HEK293 (cell line): ENCODE measurements at regions of chr15 and their contacts with region 1.

Region 1: GRCh38 chr15:71780115-71780976 is 30.0 kb upstream of the NR2E3 start:
- H3K4me3 ChIP-seq: no peak overlapping the region
- H3K27ac ChIP-seq: no peak overlapping the region
- H3K4me1 ChIP-seq: peaks cover 3% of the 10 kb centered on the region; the same call in 1 of the 2 replicates
- CTCF ChIP-seq: peak; percentile 91

Region 2: GRCh38 chr15:71612869-71613268 is 167.5 kb before region 1 on chr15:
- CTCF ChIA-PET with region 1: no interaction called
- POLR2A ChIA-PET with region 1: no interaction called
- H3K4me3 ChIP-seq: no peak overlapping the region
- H3K27ac ChIP-seq: no peak overlapping the region
- H3K4me1 ChIP-seq: no peaks in the 10 kb centered on the region
- CTCF ChIP-seq: no peak

Region 3: DNA sequence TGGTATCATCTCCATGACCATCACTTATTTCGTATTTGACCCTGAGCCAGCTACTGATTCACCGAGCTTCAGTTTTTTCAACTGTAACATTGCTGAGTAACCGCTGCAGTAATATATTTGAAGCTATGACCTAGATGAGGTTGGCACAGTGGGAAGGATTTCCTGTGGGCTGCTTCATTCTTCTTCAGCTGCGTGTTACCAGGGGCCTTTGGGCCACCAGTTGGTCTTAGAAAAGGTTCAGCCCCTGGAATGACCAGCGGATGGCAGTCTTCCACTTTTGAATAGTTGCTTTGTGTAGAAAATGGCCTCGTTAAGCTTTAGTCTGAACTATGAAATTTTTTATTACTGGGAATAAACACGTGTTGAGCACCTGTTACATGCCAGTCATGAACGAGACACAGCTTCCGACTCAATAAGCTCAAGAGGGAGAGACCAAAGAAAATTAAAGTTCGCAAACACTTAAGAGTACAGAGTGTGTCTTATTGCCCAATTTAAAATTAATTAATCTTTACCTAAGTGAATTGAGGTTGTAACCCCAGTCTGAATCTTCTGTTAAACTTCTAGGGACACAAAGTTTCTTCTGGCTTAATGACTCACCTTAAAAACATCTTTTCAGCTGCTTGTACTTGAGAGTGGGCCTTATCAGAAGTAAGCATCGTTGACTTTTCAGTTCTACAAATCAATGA is 27.6 kb before region 1 on chr15:
- CTCF ChIA-PET with region 1: interaction called, 24 read pairs
- POLR2A ChIA-PET with region 1: no interaction called
- H3K4me3 ChIP-seq: no peak overlapping the region
- H3K27ac ChIP-seq: no peak overlapping the region
- H3K4me1 ChIP-seq: peaks cover 14% of the 10 kb centered on the region
- CTCF ChIP-seq: peak; percentile 47; the same call in 1 of the 2 replicates

Region 4: GRCh38 chr15:71792521-71792920 is 12.2 kb after region 1 on chr15:
- CTCF ChIA-PET with region 1: interaction called, 32 read pairs
- POLR2A ChIA-PET with region 1: no interaction called
- H3K4me3 ChIP-seq: no peak overlapping the region
- H3K27ac ChIP-seq: no peak overlapping the region
- H3K4me1 ChIP-seq: no peaks in the 10 kb centered on the region
- CTCF ChIP-seq: no peak